Gastrocnemius medialis (tissue), 4 donors: ENCODE measurements at regions of chr11 and their contacts with region 1.

Region 1: GRCh38 chr11:22244986-22245592 is 52.2 kb downstream of the ANO5 start:
- DNase-seq: peak in 1 of 2 donors; percentile 34
- ATAC-seq: peak; percentile 74 to 92
- H3K4me3 ChIP-seq: no peak overlapping the region
- H3K27ac ChIP-seq: peak overlapping the region in 3 of 4 donors; percentile 20 to 63 (median 35)
- H3K4me1 ChIP-seq: peaks cover 5 to 17% of the 10 kb centered on the region in 2 donors
- H3K27me3 ChIP-seq: no peaks in the 10 kb centered on the region
- CTCF ChIP-seq: peak in 4 of 5 experiments; percentile 35 to 62 (median 49)
- POLR2A ChIP-seq: no peak

Region 2: DNA sequence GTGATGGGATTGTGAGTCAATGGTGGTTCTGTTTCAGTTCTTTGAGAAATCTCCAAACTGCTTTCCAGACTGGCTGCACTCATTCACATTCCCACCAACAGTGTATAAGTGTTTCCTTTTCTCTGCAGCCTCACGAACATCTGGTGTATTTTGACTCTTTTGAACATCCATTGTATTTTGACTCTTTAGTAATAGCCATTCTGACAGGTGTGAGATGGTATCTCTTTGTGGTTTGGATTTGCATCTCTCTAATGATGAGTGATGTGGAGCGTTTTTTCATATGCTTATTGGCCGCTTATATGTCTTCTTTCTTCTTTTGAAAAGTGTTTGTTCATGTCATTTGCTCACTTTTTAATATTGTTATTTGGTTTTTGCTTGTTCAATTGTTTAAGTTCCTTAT is 1556.3 kb before region 1 on chr11:
- in situ Hi-C with region 1: no loop called
- intact Hi-C with region 1: loop called (anchors 5 kb)
- DNase-seq: no peak
- ATAC-seq: no peak
- H3K4me3 ChIP-seq: no peak overlapping the region
- H3K27ac ChIP-seq: no peak overlapping the region
- H3K4me1 ChIP-seq: no peaks in the 10 kb centered on the region
- H3K27me3 ChIP-seq: no peaks in the 10 kb centered on the region
- CTCF ChIP-seq: no peak
- POLR2A ChIP-seq: no peak

Region 3: DNA sequence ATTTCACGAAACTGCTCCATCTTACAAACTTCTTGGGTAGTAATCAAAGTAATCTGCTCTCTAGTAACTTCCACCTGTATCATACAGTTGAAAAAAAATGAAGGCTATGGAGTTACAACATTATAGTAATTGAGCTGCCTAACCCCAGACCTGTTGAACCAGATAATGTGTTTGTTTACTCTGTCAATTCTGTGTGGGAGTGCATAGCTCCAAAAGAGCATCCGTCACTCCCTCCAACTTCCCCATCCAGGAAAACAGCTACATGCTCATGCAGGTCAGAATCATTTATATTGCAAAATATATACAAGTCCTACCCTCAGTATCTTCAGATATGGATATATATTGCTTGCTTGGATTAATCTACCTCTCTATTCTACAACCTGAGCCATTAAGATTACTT is 296.2 kb before region 1 on chr11:
- in situ Hi-C with region 1: no loop called
- intact Hi-C with region 1: no loop called
- DNase-seq: no peak
- ATAC-seq: no peak
- H3K4me3 ChIP-seq: no peak overlapping the region
- H3K27ac ChIP-seq: no peak overlapping the region
- H3K4me1 ChIP-seq: no peaks in the 10 kb centered on the region
- H3K27me3 ChIP-seq: no peaks in the 10 kb centered on the region
- CTCF ChIP-seq: no peak
- POLR2A ChIP-seq: no peak

Region 4: DNA sequence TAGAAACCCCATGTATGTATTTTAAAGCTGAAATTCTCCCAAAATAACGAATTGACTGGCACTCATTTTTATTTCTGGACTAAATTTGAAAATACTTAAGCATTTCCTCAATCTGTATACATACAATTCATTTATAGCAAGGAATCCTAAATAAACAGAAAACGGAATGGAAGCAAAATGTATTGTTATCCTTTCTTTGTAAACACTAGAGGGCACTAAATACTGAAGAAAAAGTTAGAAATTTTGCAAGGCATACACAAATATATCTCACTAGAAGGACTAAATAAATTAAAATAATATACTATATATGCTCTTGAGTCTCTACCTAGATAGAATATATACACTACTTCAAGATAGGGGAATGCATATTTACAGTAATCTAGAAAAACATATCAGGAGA is 75.3 kb before region 1 on chr11:
- in situ Hi-C with region 1: no loop called
- intact Hi-C with region 1: loop called (anchors 5 kb)
- DNase-seq: no peak
- ATAC-seq: no peak
- H3K4me3 ChIP-seq: no peak overlapping the region
- H3K27ac ChIP-seq: no peak overlapping the region
- H3K4me1 ChIP-seq: no peaks in the 10 kb centered on the region
- H3K27me3 ChIP-seq: no peaks in the 10 kb centered on the region
- CTCF ChIP-seq: peak in 3 of 5 experiments; percentile 38 to 53 (median 49)
- POLR2A ChIP-seq: no peak